Endothelial cell of umbilical vein (primary cell): ENCODE measurements at regions of chr12 and their contacts with region 1.

Region 1: DNA sequence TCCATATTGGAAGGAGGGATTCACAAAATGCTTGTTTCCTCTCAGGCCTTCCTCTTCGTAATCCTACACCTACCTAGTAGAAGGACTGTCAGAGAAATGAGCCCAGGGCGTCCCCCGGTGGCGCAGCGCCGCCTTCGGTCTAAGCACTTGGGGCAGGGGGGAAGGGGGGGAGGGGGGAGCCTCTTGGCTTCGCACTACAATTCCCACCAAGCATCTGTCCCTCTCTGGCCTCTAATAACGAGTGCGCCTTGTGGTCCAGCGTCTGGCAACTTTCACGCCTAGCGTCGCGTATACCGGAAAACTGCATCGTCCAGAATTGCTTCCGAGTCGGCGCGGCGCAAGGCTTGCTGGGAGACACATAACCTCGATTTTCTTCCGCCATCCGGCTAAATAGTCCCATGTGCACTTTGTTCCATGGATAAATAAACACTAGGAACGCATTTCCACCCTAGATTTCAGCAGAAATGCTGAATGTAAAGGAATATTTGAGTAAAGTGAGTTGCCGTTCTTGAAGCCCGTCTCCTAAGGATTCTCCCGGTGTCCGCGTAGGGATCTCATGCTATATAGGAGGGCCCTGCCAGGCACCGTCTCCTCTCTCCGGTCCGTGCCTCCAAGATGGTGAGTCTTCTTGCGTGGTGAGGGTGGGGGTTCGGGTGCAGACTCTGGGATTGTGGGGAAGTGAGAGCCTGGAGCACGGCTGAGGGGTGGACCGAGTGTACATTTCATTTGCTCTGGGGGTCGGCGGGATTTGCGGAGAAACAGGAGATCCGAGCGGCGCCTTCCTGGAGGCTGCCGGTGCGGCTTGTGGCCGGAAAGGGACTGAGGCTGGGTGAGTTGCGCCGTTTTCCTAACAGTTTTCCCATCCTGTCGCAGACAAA is at the start of gene RPS26:
- DNase-seq: peak; percentile 100
- H3K4me3 ChIP-seq: peak within 1 kb of the TSS; percentile 84 to 100 (median 87)
- H3K27ac ChIP-seq: peak within 1 kb of the TSS; percentile 95
- H3K4me1 ChIP-seq: peaks cover 17% of the 10 kb centered on the region
- H3K27me3 ChIP-seq: no peaks in the 10 kb centered on the region
- CTCF ChIP-seq: peak in 1 of 2 donors; percentile 46
- POLR2A ChIP-seq: peak; percentile 99
- total RNA-seq, gene RPS26: 57.3 and 66.7 TPM in 2 replicates

Region 2: GRCh38 chr12:55940065-55940732 is 101.6 kb before region 1 on chr12:
- CTCF ChIA-PET with region 1: no interaction called
- POLR2A ChIA-PET with region 1: no interaction called
- dilution Hi-C with region 1: no loop called
- intact Hi-C with region 1: no loop called
- DNase-seq: peak; percentile 85
- H3K4me3 ChIP-seq: no peak overlapping the region
- H3K27ac ChIP-seq: no peak overlapping the region
- H3K4me1 ChIP-seq: no peaks in the 10 kb centered on the region
- H3K27me3 ChIP-seq: no peaks in the 10 kb centered on the region
- CTCF ChIP-seq: peak; percentile 89 to 98
- POLR2A ChIP-seq: no peak

Region 3: DNA sequence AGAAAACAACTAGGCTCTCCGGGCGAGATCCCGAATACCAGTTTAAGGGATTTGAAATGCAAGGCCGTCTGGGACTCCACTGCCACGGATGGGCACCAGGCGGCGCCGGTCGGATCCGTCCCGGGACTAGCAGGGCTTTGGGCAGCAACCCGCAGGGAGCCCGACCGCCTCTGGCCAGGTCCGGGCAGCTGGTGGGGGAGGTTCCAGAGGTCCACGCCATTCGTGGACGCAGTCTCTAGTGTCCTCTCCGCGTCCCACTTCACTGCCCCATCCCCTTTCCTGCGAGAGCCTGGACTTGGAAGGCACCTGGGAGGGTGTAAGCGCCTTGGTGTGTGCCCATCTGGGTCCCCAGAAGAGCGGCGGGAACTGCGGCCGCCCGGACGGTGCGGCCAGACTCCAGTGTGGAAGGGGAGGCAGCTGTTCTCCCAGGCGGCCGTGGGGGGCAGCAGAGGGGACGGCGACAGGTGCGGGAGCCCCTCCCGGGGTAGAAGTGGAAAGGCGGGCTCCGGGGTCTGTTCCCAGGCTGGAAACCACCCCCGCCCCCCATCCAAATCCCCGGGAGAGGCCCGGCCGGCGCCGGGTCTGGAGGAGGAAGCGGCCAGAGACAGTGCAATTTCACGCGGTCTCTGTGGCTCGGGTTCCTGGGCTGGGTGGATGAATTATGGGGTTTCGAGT is 37.3 kb after region 1 on chr12:
- CTCF ChIA-PET with region 1: interaction called, 12 read pairs
- POLR2A ChIA-PET with region 1: interaction called, 4 read pairs
- dilution Hi-C with region 1: no loop called
- intact Hi-C with region 1: loop called (anchors 1 kb)
- DNase-seq: peak; percentile 93
- H3K4me3 ChIP-seq: peak overlapping the region; percentile 31 to 58 (median 36)
- H3K27ac ChIP-seq: no peak overlapping the region
- H3K4me1 ChIP-seq: peaks cover 8% of the 10 kb centered on the region
- H3K27me3 ChIP-seq: peaks cover 2 to 4% of the 10 kb centered on the region in 2 experiments
- CTCF ChIP-seq: peak; percentile 81 to 82
- POLR2A ChIP-seq: no peak

Region 4: DNA sequence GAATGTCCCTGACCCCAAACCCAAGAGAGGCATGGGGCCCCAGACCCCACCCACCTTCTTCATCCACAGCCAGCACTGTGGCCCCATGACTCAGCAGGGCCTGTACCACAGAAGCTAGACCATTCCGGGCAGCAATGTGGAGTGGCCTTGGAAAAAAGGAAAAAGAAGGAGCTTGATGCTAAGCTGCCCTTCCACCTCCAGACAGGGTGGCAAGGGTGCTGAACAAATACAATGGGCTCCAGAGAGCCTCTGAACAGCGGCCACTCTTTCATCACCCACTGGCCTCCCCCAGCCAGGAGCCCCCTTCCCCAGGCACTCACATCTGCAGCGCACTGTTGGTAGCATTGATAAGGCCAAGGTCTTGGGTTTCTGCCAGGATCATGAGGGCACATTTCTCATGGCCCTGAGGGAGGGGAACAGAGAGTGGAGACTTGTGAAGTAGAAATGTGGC is 202.0 kb after region 1 on chr12:
- CTCF ChIA-PET with region 1: no interaction called
- POLR2A ChIA-PET with region 1: no interaction called
- dilution Hi-C with region 1: no loop called
- intact Hi-C with region 1: no loop called
- DNase-seq: no peak
- H3K4me3 ChIP-seq: no peak overlapping the region
- H3K27ac ChIP-seq: no peak overlapping the region
- H3K4me1 ChIP-seq: no peaks in the 10 kb centered on the region
- H3K27me3 ChIP-seq: no peaks in the 10 kb centered on the region
- CTCF ChIP-seq: no peak
- POLR2A ChIP-seq: no peak

Region 5: GRCh38 chr12:56346703-56347102 is 304.9 kb after region 1 on chr12:
- CTCF ChIA-PET with region 1: no interaction called
- POLR2A ChIA-PET with region 1: no interaction called
- dilution Hi-C with region 1: no loop called
- intact Hi-C with region 1: no loop called
- DNase-seq: no peak
- H3K4me3 ChIP-seq: no peak overlapping the region
- H3K27ac ChIP-seq: no peak overlapping the region
- H3K4me1 ChIP-seq: no peaks in the 10 kb centered on the region
- H3K27me3 ChIP-seq: no peaks in the 10 kb centered on the region
- CTCF ChIP-seq: no peak
- POLR2A ChIP-seq: no peak